ENCODE measurements at regions of chr22 and their contacts with region 1.

Region 1: DNA sequence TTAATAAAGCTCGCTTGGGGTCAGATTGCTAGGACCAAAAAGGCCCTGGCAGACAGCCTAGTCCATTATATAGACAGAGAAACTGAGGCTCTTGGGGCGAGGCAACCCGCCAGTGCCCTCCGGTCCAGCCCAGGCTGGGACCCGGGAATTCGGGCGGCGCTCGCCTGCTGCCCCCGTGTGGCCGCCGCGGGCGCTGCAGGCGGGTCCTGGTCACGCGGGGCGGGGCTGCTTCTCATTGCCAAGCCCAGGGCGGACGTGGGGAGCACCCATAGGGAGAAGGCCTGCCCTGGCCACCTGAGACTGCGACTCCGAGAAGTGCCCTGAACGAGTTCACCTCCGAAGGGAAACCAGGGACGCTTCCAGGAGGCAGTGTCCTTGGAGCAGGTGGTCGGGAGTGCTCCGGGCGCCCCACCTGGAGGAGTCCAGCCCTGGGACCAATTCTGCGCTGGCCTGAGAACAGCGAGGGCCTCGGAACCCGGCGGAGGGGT is 36.0 kb upstream of the CSNK1E start:
- DNase-seq: peak in 1 of 2 donors; percentile 72
- H3K4me3 ChIP-seq: peak overlapping the region in 1 of 3 donors; percentile 19
- H3K27ac ChIP-seq: peak overlapping the region; percentile 40 to 48
- H3K4me1 ChIP-seq: no peaks in the 10 kb centered on the region
- H3K27me3 ChIP-seq: no peaks in the 10 kb centered on the region
- CTCF ChIP-seq: peak; percentile 86 to 97 (median 96)
- POLR2A ChIP-seq: no peak

Region 2: GRCh38 chr22:38051900-38052862 is 301.0 kb before region 1 on chr22:
- intact Hi-C with region 1: loop called (anchors 10 kb)
- DNase-seq: peak; percentile 68 to 80
- H3K4me3 ChIP-seq: peak overlapping the region in 1 of 3 donors; percentile 22
- H3K27ac ChIP-seq: no peak overlapping the region
- H3K4me1 ChIP-seq: no peaks in the 10 kb centered on the region
- H3K27me3 ChIP-seq: no peaks in the 10 kb centered on the region
- CTCF ChIP-seq: peak; percentile 74 to 94 (median 93)
- POLR2A ChIP-seq: no peak

Region 3: DNA sequence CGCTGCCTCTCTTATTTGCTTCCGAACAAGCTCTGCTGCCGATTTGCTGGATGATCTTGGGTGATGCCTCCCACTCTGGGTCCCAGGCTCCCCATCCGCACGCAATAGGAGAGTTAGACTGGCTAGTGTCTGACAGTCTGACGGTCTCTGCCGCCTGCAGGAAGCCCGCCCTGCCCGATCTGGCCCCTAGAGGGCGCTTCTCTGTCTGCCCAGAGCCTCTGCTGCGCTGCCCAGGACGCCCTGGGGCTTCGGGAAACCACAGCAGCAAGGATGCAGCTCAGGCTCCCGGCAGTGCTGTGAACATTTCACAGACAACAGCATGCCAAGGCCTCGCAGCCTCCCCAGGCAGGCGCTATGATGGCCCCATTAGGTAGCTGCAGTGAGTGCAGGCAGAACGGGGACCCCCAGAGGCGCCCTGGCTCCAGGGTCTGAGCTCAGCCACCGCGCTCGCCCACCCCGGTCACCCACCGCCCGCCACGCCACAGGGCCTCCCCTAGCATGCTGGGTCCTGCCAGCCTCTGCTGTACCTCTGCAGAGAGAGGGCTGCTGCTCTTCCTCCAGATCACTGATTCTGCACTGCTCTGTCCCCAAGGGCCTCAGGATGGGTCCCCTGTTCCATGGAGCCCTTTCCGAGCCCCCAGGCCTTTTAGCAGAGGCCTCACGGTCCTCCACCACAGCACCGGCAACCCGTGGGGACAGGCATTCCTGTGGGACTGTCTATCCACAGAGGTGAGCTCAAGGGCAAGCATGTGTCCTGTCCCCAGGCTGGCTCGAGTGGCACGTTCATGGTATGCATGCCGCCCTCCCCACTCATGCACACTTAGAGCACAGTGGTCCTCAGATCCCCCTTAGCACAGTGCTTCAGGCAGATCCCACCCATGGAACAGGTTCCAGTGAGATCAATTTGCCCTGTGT is 238.4 kb before region 1 on chr22:
- intact Hi-C with region 1: loop called (anchors 10 kb)
- DNase-seq: peak; percentile 73 to 89
- H3K4me3 ChIP-seq: no peak overlapping the region
- H3K27ac ChIP-seq: no peak overlapping the region
- H3K4me1 ChIP-seq: peaks cover 0 to 6% of the 10 kb centered on the region in 2 donors
- H3K27me3 ChIP-seq: no peaks in the 10 kb centered on the region
- CTCF ChIP-seq: peak; percentile 57 to 90 (median 89)
- POLR2A ChIP-seq: no peak

Region 4: GRCh38 chr22:38218661-38219622 is 134.2 kb before region 1 on chr22:
- intact Hi-C with region 1: no loop called
- DNase-seq: peak; percentile 88 to 91
- H3K4me3 ChIP-seq: no peak overlapping the region
- H3K27ac ChIP-seq: peak overlapping the region; percentile 96 to 97
- H3K4me1 ChIP-seq: peaks cover 21 to 27% of the 10 kb centered on the region in 2 donors
- H3K27me3 ChIP-seq: no peaks in the 10 kb centered on the region
- CTCF ChIP-seq: no peak
- POLR2A ChIP-seq: no peak